Right ventricle myocardium inferior (tissue), 1 donor: ENCODE measurements at regions of chr15 and their contacts with region 1.

Region 1: GRCh38 chr15:51829360-51830275 is at the start of gene TMOD3:
- DNase-seq: peak; percentile 98
- ATAC-seq: peak; percentile 98
- total RNA-seq, gene TMOD3: 19.2 TPM

Region 2: DNA sequence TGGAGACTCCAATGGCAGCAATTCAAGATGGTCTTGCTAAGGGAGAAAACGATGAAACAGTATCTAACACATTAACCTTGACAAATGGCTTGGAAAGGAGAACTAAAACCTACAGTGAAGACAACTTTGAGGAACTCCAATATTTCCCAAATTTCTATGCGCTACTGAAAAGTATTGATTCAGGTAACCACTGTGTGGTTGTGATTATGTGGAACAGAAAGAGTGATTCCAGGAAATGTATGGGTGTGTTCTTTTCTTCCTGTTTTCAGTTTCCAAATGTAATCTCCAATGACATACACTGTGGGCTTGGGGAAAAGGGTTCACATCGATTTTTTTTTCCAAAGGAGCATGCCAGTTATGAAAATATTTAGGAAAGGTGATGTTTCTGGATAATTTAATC is 137.5 kb before region 1 on chr15:
- intact Hi-C with region 1: no loop called
- DNase-seq: no peak
- ATAC-seq: no peak

Region 3: GRCh38 chr15:51874751-51875528 is 45.3 kb after region 1 on chr15:
- intact Hi-C with region 1: loop called (anchors 5 kb)
- DNase-seq: no peak
- ATAC-seq: peak; percentile 72